CD4-positive, alpha-beta memory T cell (primary cell): ENCODE measurements at regions of chr7 and their contacts with region 1.

Region 1: DNA sequence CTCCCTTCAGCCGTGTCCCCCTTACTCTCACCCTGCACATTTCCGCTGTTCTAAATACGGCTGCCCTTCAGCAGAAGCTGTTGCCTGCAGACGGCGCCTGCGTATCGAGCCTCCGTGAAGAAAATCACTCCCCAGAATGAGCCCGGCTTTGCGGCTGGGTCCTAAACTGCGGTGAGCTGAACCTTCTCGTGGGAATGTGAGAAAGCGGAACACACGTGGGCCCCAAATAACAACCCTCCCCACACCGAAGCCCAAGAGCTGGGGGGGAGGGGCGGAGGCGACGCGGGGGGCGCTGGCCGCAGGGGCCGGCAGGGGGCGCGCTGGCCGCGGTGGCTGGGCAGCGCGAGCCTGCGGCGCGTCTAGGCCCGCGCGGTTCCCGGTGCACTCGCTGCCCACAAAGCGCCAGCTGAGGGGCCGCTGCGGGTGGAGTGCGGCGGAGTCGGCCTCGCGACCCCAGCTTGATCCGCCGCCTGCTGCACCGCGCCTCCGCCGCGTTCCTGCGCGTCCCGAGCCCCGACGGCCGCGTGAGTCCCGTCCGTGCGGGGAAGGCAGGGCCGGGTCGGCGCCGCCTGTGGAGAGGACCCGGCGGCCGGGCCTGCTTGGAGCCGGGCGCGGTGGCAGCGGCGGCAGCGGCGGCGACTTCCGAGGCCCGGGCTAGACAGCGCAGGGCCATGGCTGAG is at the start of gene ZNF398:
- DNase-seq: peak; percentile 83 to 89 (median 85)
- H3K4me3 ChIP-seq: peak within 1 kb of the TSS; percentile 71 to 74
- H3K4me3 Mint-ChIP-seq: peak within 1 kb of the TSS; percentile 85 to 95 (median 92)
- H3K27ac ChIP-seq: peak within 1 kb of the TSS; percentile 86
- H3K27ac Mint-ChIP-seq: peak within 1 kb of the TSS; percentile 87 to 97 (median 96)
- H3K4me1 ChIP-seq: peaks cover 35% of the 10 kb centered on the region
- H3K4me1 Mint-ChIP-seq: peaks cover 18 to 46% (median 32%) of the 10 kb centered on the region in 4 donors
- H3K27me3 ChIP-seq: no peaks in the 10 kb centered on the region
- H3K27me3 Mint-ChIP-seq: no peaks in the 10 kb centered on the region
- total RNA-seq, gene ZNF398: 26.9 to 28.4 TPM

Region 2: GRCh38 chr7:148935451-148935850 is 211.8 kb before region 1 on chr7:
- CTCF ChIA-PET with region 1: no interaction called
- POLR2A ChIA-PET with region 1: no interaction called
- intact Hi-C with region 1: no loop called
- DNase-seq: no peak
- H3K4me3 ChIP-seq: no peak overlapping the region
- H3K4me3 Mint-ChIP-seq: no peak overlapping the region
- H3K27ac ChIP-seq: no peak overlapping the region
- H3K27ac Mint-ChIP-seq: no peak overlapping the region
- H3K4me1 ChIP-seq: peaks cover 12% of the 10 kb centered on the region
- H3K4me1 Mint-ChIP-seq: peaks cover 4 to 12% (median 7%) of the 10 kb centered on the region in 4 donors
- H3K27me3 ChIP-seq: no peaks in the 10 kb centered on the region
- H3K27me3 Mint-ChIP-seq: no peaks in the 10 kb centered on the region

Region 3: GRCh38 chr7:149125863-149126661 is 21.1 kb before region 1 on chr7 and contains the start of gene ZNF425:
- CTCF ChIA-PET with region 1: interaction called, 56 read pairs
- POLR2A ChIA-PET with region 1: interaction called, 144 read pairs
- intact Hi-C with region 1: loop called (anchors 1 kb)
- DNase-seq: peak; percentile 89 to 94 (median 91)
- H3K4me3 ChIP-seq: peak within 1 kb of the TSS; percentile 83 to 96
- H3K4me3 Mint-ChIP-seq: peak within 1 kb of the TSS; percentile 91 to 100 (median 100)
- H3K27ac ChIP-seq: peak within 1 kb of the TSS; percentile 88
- H3K27ac Mint-ChIP-seq: peak within 1 kb of the TSS; percentile 91 to 99 (median 98)
- H3K4me1 ChIP-seq: peaks cover 19% of the 10 kb centered on the region
- H3K4me1 Mint-ChIP-seq: peaks cover 15 to 35% (median 25%) of the 10 kb centered on the region in 4 donors
- H3K27me3 ChIP-seq: no peaks in the 10 kb centered on the region
- H3K27me3 Mint-ChIP-seq: no peaks in the 10 kb centered on the region
- total RNA-seq, gene ZNF425: 3.2 to 4.0 TPM

Region 4: DNA sequence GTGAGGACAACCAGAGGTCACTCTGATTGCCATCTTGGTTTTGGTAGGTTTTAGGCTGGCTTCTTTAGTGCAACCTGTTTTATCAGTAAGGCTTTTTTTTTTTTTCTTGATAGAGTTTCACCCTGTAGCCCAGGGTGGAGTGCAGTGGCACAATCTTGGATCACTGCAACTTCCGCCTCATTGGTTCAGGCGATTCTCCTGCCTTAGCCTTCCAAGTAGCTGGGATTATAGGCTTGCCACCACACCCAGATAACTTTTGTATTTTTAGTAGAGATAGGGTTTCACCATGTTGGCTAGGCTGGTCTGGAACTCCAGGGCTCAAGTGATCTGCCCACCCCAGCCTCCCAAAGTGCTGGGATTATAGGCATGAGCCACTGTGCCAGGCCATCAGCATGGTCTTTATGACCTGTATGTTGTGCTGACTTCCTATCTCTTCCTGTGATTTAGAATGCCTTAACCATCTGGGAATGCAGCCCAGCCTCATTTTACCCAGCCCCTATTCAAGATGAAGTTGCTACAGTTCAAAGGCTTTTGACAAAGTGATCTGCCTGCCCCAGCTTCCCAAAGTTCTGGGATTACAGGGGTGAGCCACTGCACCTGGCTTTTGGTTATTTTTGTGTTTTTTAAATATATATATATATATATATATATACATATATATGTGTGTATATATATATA is 14.0 kb before region 1 on chr7:
- CTCF ChIA-PET with region 1: interaction called, 56 read pairs
- POLR2A ChIA-PET with region 1: interaction called, 16 read pairs
- intact Hi-C with region 1: no loop called
- DNase-seq: no peak
- H3K4me3 ChIP-seq: no peak overlapping the region
- H3K4me3 Mint-ChIP-seq: no peak overlapping the region
- H3K27ac ChIP-seq: no peak overlapping the region
- H3K27ac Mint-ChIP-seq: no peak overlapping the region
- H3K4me1 ChIP-seq: peaks cover 3% of the 10 kb centered on the region
- H3K4me1 Mint-ChIP-seq: peaks cover under 1 to 4% (median 2%) of the 10 kb centered on the region in 4 donors
- H3K27me3 ChIP-seq: no peaks in the 10 kb centered on the region
- H3K27me3 Mint-ChIP-seq: no peaks in the 10 kb centered on the region

Region 5: GRCh38 chr7:149245244-149245643 is 98.0 kb after region 1 on chr7:
- CTCF ChIA-PET with region 1: no interaction called
- POLR2A ChIA-PET with region 1: no interaction called
- intact Hi-C with region 1: no loop called
- DNase-seq: no peak
- H3K4me3 ChIP-seq: no peak overlapping the region
- H3K4me3 Mint-ChIP-seq: no peak overlapping the region
- H3K27ac ChIP-seq: no peak overlapping the region
- H3K27ac Mint-ChIP-seq: peak overlapping the region in 2 of 7 donors; percentile 15 to 60
- H3K4me1 ChIP-seq: peaks cover 20% of the 10 kb centered on the region
- H3K4me1 Mint-ChIP-seq: peaks cover 34 to 54% (median 39%) of the 10 kb centered on the region in 4 donors
- H3K27me3 ChIP-seq: no peaks in the 10 kb centered on the region
- H3K27me3 Mint-ChIP-seq: no peaks in the 10 kb centered on the region